Left cardiac atrium (tissue), 4 donors: ENCODE measurements at regions of chr6 and their contacts with region 1.

Region 1: DNA sequence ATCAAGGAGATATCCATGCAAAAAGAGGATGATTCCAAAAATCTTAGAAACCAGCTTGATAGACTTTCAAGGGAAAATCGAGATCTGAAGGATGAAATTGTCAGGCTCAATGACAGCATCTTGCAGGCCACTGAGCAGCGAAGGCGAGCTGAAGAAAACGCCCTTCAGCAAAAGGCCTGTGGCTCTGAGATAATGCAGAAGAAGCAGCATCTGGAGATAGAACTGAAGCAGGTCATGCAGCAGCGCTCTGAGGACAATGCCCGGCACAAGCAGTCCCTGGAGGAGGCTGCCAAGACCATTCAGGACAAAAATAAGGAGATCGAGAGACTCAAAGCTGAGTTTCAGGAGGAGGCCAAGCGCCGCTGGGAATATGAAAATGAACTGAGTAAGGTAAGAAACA is 10.1 kb upstream of the SNRNP48 start:
- DNase-seq: no peak
- ATAC-seq: no peak

Region 2: GRCh38 chr6:7300926-7301325 is 278.9 kb before region 1 on chr6:
- intact Hi-C with region 1: loop called in 1 of 2 experiments (anchors 10 kb)
- DNase-seq: no peak
- ATAC-seq: no peak

Region 3: GRCh38 chr6:7414811-7415210 is 165.0 kb before region 1 on chr6:
- intact Hi-C with region 1: loop called in 1 of 2 experiments (anchors 10 kb)
- DNase-seq: no peak
- ATAC-seq: peak; percentile 38 to 93

Region 4: GRCh38 chr6:7528565-7528964 is 51.3 kb before region 1 on chr6:
- intact Hi-C with region 1: no loop called
- DNase-seq: no peak
- ATAC-seq: peak; percentile 8 to 72